Activated naive CD4-positive, alpha-beta T cell treated with anti-CD3 and anti-CD28 coated beads, Interleukin-2, amount 10 ng/mL, durations not matched to agents 7 days and 5 days (primary cell): ENCODE measurements at regions of chr9 and their contacts with region 1.

Region 1: GRCh38 chr9:89602978-89603766 is 1.6 kb upstream of the GADD45G start:
- DNase-seq: peak; percentile 92
- H3K4me3 Mint-ChIP-seq: peak overlapping the region; percentile 69
- H3K27ac Mint-ChIP-seq: peak overlapping the region; percentile 34
- H3K4me1 Mint-ChIP-seq: peaks cover 39% of the 10 kb centered on the region
- H3K27me3 Mint-ChIP-seq: peaks cover 73% of the 10 kb centered on the region

Region 2: GRCh38 chr9:89483592-89484522 is 119.3 kb before region 1 on chr9:
- CTCF ChIA-PET with region 1: no interaction called
- DNase-seq: peak; percentile 80
- H3K4me3 Mint-ChIP-seq: peak overlapping the region; percentile 81
- H3K27ac Mint-ChIP-seq: peak overlapping the region; percentile 88
- H3K4me1 Mint-ChIP-seq: peaks cover 89% of the 10 kb centered on the region
- H3K27me3 Mint-ChIP-seq: no peaks in the 10 kb centered on the region

Region 3: GRCh38 chr9:89542401-89543021 is 60.7 kb before region 1 on chr9:
- CTCF ChIA-PET with region 1: no interaction called
- DNase-seq: no peak
- H3K4me3 Mint-ChIP-seq: no peak overlapping the region
- H3K27ac Mint-ChIP-seq: no peak overlapping the region
- H3K4me1 Mint-ChIP-seq: peaks cover 43% of the 10 kb centered on the region
- H3K27me3 Mint-ChIP-seq: no peaks in the 10 kb centered on the region

Region 4: GRCh38 chr9:89613912-89614892 is 11.0 kb after region 1 on chr9:
- CTCF ChIA-PET with region 1: interaction called, 12 read pairs
- DNase-seq: no peak
- H3K4me3 Mint-ChIP-seq: no peak overlapping the region
- H3K27ac Mint-ChIP-seq: no peak overlapping the region
- H3K4me1 Mint-ChIP-seq: no peaks in the 10 kb centered on the region
- H3K27me3 Mint-ChIP-seq: peaks cover 64% of the 10 kb centered on the region

Region 5: GRCh38 chr9:89743573-89744361 is 140.6 kb after region 1 on chr9:
- CTCF ChIA-PET with region 1: interaction called, 17 read pairs
- DNase-seq: peak; percentile 87
- H3K4me3 Mint-ChIP-seq: peak overlapping the region; percentile 54
- H3K27ac Mint-ChIP-seq: peak overlapping the region; percentile 88
- H3K4me1 Mint-ChIP-seq: peaks cover 91% of the 10 kb centered on the region
- H3K27me3 Mint-ChIP-seq: peaks cover 6% of the 10 kb centered on the region

Region 6: GRCh38 chr9:89911721-89912604 is 308.8 kb after region 1 on chr9:
- CTCF ChIA-PET with region 1: interaction called, 21 read pairs
- DNase-seq: no peak
- H3K4me3 Mint-ChIP-seq: no peak overlapping the region
- H3K27ac Mint-ChIP-seq: no peak overlapping the region
- H3K4me1 Mint-ChIP-seq: no peaks in the 10 kb centered on the region
- H3K27me3 Mint-ChIP-seq: peaks cover 29% of the 10 kb centered on the region

Region 7: GRCh38 chr9:89929673-89930480 is 326.7 kb after region 1 on chr9:
- CTCF ChIA-PET with region 1: interaction called, 25 read pairs
- DNase-seq: peak; percentile 14
- H3K4me3 Mint-ChIP-seq: no peak overlapping the region
- H3K27ac Mint-ChIP-seq: no peak overlapping the region
- H3K4me1 Mint-ChIP-seq: peaks cover 11% of the 10 kb centered on the region
- H3K27me3 Mint-ChIP-seq: peaks cover 51% of the 10 kb centered on the region

Region 8: DNA sequence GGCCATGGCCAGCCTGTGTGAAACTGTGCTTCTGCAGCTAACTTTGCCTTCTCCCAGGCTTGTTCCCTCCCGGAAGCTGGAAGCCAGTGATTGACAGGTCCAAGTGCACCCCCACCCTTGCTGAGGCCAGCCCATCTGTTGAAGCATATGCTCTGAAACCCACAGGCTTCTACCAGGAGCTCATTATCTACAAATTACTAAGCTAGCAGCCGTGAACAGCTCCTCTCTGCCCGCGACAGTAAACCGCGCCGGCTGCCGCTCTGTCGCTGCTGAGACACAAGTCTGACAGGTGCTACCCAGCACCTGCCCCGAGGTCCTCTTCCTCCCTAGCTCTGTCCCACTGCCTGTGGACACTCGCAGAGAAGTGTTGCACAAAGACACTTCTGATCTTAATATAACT is 492.5 kb after region 1 on chr9:
- CTCF ChIA-PET with region 1: interaction called, 171 read pairs
- DNase-seq: no peak
- H3K4me3 Mint-ChIP-seq: no peak overlapping the region
- H3K27ac Mint-ChIP-seq: no peak overlapping the region
- H3K4me1 Mint-ChIP-seq: peaks cover 20% of the 10 kb centered on the region
- H3K27me3 Mint-ChIP-seq: peaks cover 40% of the 10 kb centered on the region